Gastrocnemius medialis (tissue), 4 donors: ENCODE measurements at regions of chr1 and their contacts with region 1.

Region 1: GRCh38 chr1:96596226-96596922 is 125.2 kb upstream of the PTBP2 start:
- DNase-seq: peak in 1 of 2 donors; percentile 43
- ATAC-seq: peak; percentile 53 to 60
- H3K4me3 ChIP-seq: no peak overlapping the region
- H3K27ac ChIP-seq: no peak overlapping the region
- H3K4me1 ChIP-seq: peaks cover 8 to 28% of the 10 kb centered on the region in 2 donors
- H3K27me3 ChIP-seq: no peaks in the 10 kb centered on the region
- CTCF ChIP-seq: peak; percentile 15 to 56 (median 27)
- POLR2A ChIP-seq: no peak

Region 2: GRCh38 chr1:96721416-96722160 is 125.2 kb after region 1 on chr1 and contains the start of gene PTBP2:
- in situ Hi-C with region 1: no loop called
- intact Hi-C with region 1: loop called (anchors 5 kb)
- DNase-seq: peak; percentile 45 to 63
- ATAC-seq: peak; percentile 89 to 91
- H3K4me3 ChIP-seq: peak within 1 kb of the TSS; percentile 91 to 99 (median 97)
- H3K27ac ChIP-seq: peak within 1 kb of the TSS; percentile 96 to 98 (median 97)
- H3K4me1 ChIP-seq: peaks cover 12 to 18% of the 10 kb centered on the region in 2 donors
- H3K27me3 ChIP-seq: no peaks in the 10 kb centered on the region
- CTCF ChIP-seq: peak in 1 of 5 experiments; percentile 18
- POLR2A ChIP-seq: peak; percentile 37 to 38
- total RNA-seq, gene PTBP2: 21.4 to 33.0 (median 26.5) TPM